Right cardiac atrium (tissue), 5 donors: ENCODE measurements at regions of chr10 and their contacts with region 1.

Region 1: DNA sequence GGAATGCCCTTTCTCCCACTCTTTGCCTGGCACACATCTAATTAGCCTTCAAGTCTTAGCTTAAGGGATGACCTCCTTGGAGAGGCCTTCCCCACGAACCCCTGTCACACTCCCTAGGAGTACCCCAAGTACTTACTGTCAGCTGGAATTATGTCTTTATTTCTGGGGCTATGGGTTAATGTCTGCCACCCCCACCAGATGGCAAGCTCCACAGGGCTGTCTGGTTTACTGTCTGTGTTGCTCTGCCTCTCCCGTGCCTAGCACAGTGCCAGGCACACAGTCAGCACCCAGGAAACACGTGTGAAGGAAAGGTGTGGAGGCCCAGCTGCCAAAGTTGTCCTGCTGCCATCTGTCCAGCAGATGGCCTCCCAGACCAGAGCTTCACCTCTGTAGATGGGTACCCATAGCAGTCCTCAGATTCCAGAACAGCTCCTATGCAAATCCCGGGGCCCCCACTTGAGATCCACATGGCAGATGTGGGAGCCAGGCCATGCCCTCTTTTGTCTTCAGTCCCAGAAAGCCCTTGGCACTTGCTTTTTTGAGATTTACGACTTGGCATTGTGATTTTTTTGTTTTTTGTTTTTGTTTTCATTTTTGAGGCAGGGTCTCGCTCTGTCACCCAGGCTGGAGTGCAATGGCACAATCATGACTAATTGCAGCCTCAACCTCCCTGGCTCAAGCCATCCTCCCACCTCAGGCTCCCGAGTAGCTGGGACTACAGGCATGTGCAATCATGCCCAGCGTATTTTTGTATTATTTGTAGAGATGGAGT is 17.2 kb upstream of the PALD1 start:
- DNase-seq: peak in 2 of 3 donors; percentile 81 to 86
- ATAC-seq: peak; percentile 47 to 59
- H3K4me3 ChIP-seq: no peak overlapping the region
- H3K27ac ChIP-seq: no peak overlapping the region
- H3K4me1 ChIP-seq: peaks cover 7% of the 10 kb centered on the region
- H3K27me3 ChIP-seq: no peaks in the 10 kb centered on the region

Region 2: DNA sequence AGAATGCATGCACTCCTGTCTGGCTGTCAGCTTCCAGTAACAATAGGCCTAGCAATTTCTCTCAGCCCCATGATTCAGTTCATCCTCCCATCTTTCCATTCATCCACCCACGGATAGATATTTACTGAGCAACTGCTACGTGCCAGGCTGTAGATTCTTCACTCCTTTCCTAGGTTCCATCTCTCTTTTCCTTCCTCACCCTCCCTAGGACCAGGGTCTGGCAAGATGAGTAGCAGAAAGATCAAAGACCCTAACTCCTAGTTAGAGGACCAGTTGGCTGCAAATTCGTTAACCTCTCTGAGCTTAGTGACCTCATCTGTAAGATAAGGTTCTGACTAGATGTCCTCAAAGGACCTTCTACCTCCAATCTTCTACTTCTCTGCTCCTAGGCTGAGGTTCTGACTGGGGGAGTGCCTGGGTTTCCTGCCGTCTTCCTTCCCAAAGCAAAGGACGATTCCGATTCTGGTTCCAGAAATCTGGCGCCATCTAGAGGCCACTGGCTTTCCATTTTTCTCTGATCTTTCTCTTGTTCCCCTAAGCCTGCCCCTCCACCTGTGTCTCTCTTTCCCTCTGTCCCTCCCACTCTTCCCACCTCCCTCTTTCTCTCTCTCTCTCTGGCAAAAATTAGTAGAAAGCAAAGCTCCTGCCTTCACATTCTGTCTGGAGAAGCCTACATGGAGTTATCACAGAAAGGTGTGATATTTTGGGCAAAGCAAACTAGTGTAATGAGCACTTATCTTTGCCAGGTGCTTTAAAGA is 297.5 kb after region 1 on chr10:
- intact Hi-C with region 1: loop called in 3 of 4 experiments (anchors 5 to 10 kb)
- DNase-seq: peak; percentile 68 to 79 (median 78)
- ATAC-seq: peak; percentile 58 to 67
- H3K4me3 ChIP-seq: no peak overlapping the region
- H3K27ac ChIP-seq: no peak overlapping the region
- H3K4me1 ChIP-seq: no peaks in the 10 kb centered on the region
- H3K27me3 ChIP-seq: no peaks in the 10 kb centered on the region